ENCODE measurements at regions of chr6 and their contacts with region 1.

Region 1: DNA sequence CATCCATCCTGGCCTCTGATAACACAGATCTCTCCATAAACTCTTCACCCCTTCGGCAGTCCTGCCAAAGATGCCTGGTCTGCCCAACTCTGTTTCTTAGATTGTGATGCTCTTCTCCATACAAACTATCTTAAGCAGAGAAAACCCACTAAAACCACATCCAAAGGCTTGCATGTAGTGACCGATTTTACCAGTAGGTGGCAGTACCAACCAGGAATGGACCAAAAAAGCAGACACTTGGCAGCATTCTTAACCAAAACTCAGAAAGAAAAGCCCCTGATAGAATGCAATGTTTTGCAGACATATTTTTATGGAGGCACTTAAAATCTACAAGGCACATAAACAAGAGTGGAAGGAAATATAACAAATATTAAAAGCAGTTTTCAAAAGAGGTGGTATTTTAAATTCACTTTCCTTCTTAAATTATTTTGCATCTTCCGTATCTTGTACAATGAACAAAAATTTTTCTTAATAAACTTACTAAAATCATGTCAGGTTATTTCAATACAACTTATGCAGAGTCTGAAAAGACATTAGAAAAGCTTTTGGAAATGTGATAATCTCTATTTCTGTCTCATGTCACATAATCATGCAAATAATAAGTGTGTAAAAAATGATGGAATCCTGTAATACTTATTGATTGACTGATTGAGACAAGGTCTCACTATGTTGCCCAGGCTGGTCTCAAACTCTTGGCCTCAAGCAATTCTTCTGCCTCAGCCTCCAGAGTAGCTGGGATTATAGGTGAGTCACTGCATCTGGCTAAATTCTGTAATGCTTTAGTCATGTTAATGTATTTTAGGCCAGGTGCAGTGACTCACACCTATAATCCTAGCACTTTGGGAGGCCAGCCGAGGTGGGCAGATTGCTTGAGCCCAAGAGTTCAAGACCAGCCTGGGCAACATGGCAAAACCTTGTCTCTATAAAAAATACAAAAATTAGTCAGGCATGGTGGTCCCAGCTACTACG is 29.4 kb downstream of the LRP11 start:
- H3K4me3 ChIP-seq: no peak overlapping the region
- H3K27ac ChIP-seq: no peak overlapping the region
- H3K4me1 ChIP-seq: no peaks in the 10 kb centered on the region
- CTCF ChIP-seq: peak; percentile 63; the same call in 1 of the 2 replicates

Region 2: DNA sequence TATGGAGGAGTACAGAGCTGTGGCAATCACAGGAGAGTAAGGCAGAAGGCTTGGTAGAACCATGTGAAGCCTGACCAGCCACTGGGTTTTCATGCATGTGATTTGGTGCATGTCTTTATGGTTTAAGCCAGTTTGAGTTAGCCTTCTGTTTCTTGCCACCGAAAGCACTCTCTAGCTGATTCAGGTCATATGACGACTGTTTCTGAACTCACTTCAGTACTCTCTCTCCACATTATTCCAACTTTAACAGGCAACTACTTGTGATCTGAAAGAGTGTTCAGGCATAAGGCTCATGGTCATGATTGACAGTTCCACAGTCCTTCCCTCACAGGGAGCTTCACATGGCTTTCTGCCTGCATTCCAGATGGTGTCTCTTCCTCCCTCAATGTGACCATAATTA is 580.5 kb before region 1 on chr6:
- CTCF ChIA-PET with region 1: no interaction called
- POLR2A ChIA-PET with region 1: no interaction called
- H3K4me3 ChIP-seq: no peak overlapping the region
- H3K27ac ChIP-seq: no peak overlapping the region
- H3K4me1 ChIP-seq: no peaks in the 10 kb centered on the region
- CTCF ChIP-seq: no peak

Region 3: GRCh38 chr6:149513915-149514314 is 320.9 kb before region 1 on chr6:
- CTCF ChIA-PET with region 1: no interaction called
- POLR2A ChIA-PET with region 1: no interaction called
- H3K4me3 ChIP-seq: no peak overlapping the region
- H3K27ac ChIP-seq: no peak overlapping the region
- H3K4me1 ChIP-seq: no peaks in the 10 kb centered on the region
- CTCF ChIP-seq: no peak

Region 4: DNA sequence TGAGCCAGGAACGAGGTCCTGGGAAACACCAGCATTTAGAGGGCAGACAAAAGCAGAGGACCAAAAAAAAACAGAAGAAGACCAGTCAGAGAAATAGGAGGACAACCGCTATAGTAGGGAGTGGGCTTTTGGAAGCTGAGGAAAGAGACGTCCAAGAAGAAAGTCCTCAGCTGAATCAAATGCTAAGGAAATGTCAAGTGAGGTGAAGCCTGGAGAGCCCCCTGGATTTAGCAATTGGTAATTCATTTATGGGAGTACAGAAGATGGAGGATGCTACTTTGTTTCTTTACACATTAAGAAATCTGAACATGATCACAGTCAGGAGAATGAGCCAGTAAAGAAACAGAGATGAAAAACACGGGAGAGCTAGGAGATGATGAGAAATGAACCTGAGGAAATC is 11.8 kb before region 1 on chr6:
- CTCF ChIA-PET with region 1: interaction called, 41 read pairs
- POLR2A ChIA-PET with region 1: no interaction called
- H3K4me3 ChIP-seq: no peak overlapping the region
- H3K27ac ChIP-seq: no peak overlapping the region
- H3K4me1 ChIP-seq: no peaks in the 10 kb centered on the region
- CTCF ChIP-seq: no peak

Region 5: GRCh38 chr6:149852180-149852579 is 17.4 kb after region 1 on chr6:
- CTCF ChIA-PET with region 1: interaction called, 49 read pairs
- POLR2A ChIA-PET with region 1: interaction called, 5 read pairs
- H3K4me3 ChIP-seq: no peak overlapping the region
- H3K27ac ChIP-seq: no peak overlapping the region; the same call in 1 of the 2 replicates
- H3K4me1 ChIP-seq: peaks cover 41% of the 10 kb centered on the region
- CTCF ChIP-seq: no peak

Region 6: GRCh38 chr6:149903938-149904611 is 69.3 kb after region 1 on chr6:
- CTCF ChIA-PET with region 1: interaction called, 19 read pairs
- POLR2A ChIA-PET with region 1: no interaction called
- H3K4me3 ChIP-seq: no peak overlapping the region
- H3K27ac ChIP-seq: no peak overlapping the region
- H3K4me1 ChIP-seq: no peaks in the 10 kb centered on the region
- CTCF ChIP-seq: 0 out of 2 replicates have a peak, but pooled peaks have one; percentile 10

Region 7: DNA sequence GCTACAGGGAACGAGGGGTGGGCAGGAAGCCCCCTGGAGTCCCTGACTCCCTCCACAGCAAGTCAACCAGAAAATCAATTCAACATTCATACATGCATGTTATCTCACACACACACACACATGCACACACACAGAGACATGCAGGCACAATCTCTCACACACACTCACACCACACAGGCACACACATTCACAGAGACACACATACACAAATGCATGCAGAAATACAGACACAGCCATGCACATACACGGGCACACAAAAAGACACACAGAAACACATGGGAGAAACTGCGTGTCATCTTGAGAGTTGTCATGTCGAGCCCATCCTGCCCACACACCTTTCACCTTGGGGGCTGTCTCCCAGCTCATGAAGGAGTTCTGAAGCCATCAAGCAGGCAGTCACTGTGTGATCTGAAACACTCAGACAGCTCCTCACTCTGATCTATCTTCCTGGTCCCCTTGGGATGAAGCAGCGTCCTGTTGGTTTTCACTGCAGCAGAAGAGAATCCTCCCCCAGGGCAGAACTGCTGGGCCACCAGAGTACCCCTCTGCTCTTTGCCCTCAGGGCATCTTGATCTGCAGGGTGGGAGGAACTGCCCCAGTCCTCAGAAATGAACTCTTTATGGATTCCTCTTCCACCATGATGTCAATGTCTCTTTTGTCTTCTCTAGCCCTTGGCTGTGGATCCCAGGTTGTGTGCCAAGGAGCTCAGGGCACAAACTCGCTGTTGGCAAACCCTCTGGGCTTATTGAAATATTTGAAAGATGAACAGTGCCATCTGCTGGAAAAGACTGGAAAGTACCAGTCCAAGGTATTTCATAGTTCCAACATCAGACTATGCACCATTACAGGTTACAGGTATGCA is 181.8 kb after region 1 on chr6:
- CTCF ChIA-PET with region 1: interaction called, 19 read pairs
- POLR2A ChIA-PET with region 1: no interaction called
- H3K4me3 ChIP-seq: no peak overlapping the region
- H3K27ac ChIP-seq: no peak overlapping the region
- H3K4me1 ChIP-seq: no peaks in the 10 kb centered on the region
- CTCF ChIP-seq: peak; percentile 69; the same call in 1 of the 2 replicates